CD4-positive, alpha-beta memory T cell (primary cell): ENCODE measurements at regions of chr2 and their contacts with region 1.

Region 1: GRCh38 chr2:55175254-55176025 is 56.7 kb downstream of the CLHC1 start:
- DNase-seq: peak in 4 of 5 donors; percentile 46 to 64 (median 52)
- H3K4me3 ChIP-seq: no peak overlapping the region
- H3K4me3 Mint-ChIP-seq: peak overlapping the region in 2 of 8 donors; percentile 1 to 27
- H3K27ac ChIP-seq: no peak overlapping the region
- H3K27ac Mint-ChIP-seq: peak overlapping the region in 1 of 7 donors; percentile 44
- H3K4me1 ChIP-seq: no peaks in the 10 kb centered on the region
- H3K4me1 Mint-ChIP-seq: peaks cover 0 to 6% (median 3%) of the 10 kb centered on the region in 4 donors
- H3K27me3 ChIP-seq: no peaks in the 10 kb centered on the region
- H3K27me3 Mint-ChIP-seq: no peaks in the 10 kb centered on the region

Region 2: GRCh38 chr2:54763636-54764291 is 411.7 kb before region 1 on chr2:
- CTCF ChIA-PET with region 1: no interaction called
- POLR2A ChIA-PET with region 1: no interaction called
- intact Hi-C with region 1: loop called (anchors 5 kb)
- DNase-seq: no peak
- H3K4me3 ChIP-seq: no peak overlapping the region
- H3K4me3 Mint-ChIP-seq: no peak overlapping the region
- H3K27ac ChIP-seq: no peak overlapping the region
- H3K27ac Mint-ChIP-seq: no peak overlapping the region
- H3K4me1 ChIP-seq: no peaks in the 10 kb centered on the region
- H3K4me1 Mint-ChIP-seq: no peaks in the 10 kb centered on the region
- H3K27me3 ChIP-seq: no peaks in the 10 kb centered on the region
- H3K27me3 Mint-ChIP-seq: peaks cover 2 to 6% of the 10 kb centered on the region in 2 donors

Region 3: GRCh38 chr2:54899576-54900200 is 275.8 kb before region 1 on chr2:
- CTCF ChIA-PET with region 1: interaction called, 84 read pairs
- POLR2A ChIA-PET with region 1: no interaction called
- intact Hi-C with region 1: no loop called
- DNase-seq: peak in 4 of 5 donors; percentile 11 to 25 (median 16)
- H3K4me3 ChIP-seq: no peak overlapping the region
- H3K4me3 Mint-ChIP-seq: no peak overlapping the region
- H3K27ac ChIP-seq: no peak overlapping the region
- H3K27ac Mint-ChIP-seq: no peak overlapping the region
- H3K4me1 ChIP-seq: peaks cover 27% of the 10 kb centered on the region
- H3K4me1 Mint-ChIP-seq: peaks cover 20 to 26% (median 23%) of the 10 kb centered on the region in 4 donors
- H3K27me3 ChIP-seq: no peaks in the 10 kb centered on the region
- H3K27me3 Mint-ChIP-seq: no peaks in the 10 kb centered on the region